GM12878 (cell line): ENCODE measurements at regions of chr14 and their contacts with region 1.

Region 1: GRCh38 chr14:32076278-32077080 is 625 bp upstream of the ARHGAP5 start:
- DNase-seq: peak; percentile 28
- ATAC-seq: peak; percentile 65
- H3K4me3 ChIP-seq: peak overlapping the region; percentile 95
- H3K27ac ChIP-seq: no peak overlapping the region
- H3K4me1 ChIP-seq: no peaks in the 10 kb centered on the region
- H3K27me3 ChIP-seq: no peaks in the 10 kb centered on the region
- CTCF ChIP-seq: no peak
- EP300 ChIP-seq: no peak
- POLR2A ChIP-seq: no peak
- RAD21 ChIP-seq: no peak

Region 2: DNA sequence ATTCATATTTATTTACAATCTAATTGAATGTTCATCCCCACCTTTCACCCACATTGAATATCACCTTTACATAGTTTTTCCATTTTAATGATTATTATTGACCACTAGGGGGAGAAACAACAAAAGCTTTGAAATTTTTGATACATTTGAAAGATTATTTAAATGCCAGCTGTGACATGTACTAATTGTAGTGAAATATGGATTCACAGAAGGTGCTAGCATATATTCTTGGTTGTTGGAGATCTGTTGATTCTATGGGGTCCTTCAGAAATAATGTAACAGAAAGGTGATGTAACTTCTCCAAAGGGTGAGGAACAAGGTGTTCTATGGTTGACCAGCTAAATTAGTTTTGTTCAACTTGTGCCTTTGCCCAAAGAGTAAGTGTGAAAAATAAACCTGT is 566.3 kb before region 1 on chr14:
- CTCF ChIA-PET with region 1: interaction called, 7 read pairs
- POLR2A ChIA-PET with region 1: no interaction called
- RAD21 ChIA-PET with region 1: no interaction called
- SMC1A ChIA-PET with region 1: interaction called, 3 read pairs
- in situ Hi-C with region 1: no loop called
- intact Hi-C with region 1: loop called (anchors 10 kb)
- DNase-seq: no peak
- ATAC-seq: peak; percentile 41; the same call in 2 of the 3 replicates
- H3K4me3 ChIP-seq: no peak overlapping the region
- H3K27ac ChIP-seq: no peak overlapping the region
- H3K4me1 ChIP-seq: no peaks in the 10 kb centered on the region
- H3K27me3 ChIP-seq: no peaks in the 10 kb centered on the region
- CTCF ChIP-seq: peak; percentile 26 to 50 (median 42); a peak in 4 of 6 replicates
- EP300 ChIP-seq: no peak
- POLR2A ChIP-seq: no peak
- RAD21 ChIP-seq: peak; percentile 54

Region 3: DNA sequence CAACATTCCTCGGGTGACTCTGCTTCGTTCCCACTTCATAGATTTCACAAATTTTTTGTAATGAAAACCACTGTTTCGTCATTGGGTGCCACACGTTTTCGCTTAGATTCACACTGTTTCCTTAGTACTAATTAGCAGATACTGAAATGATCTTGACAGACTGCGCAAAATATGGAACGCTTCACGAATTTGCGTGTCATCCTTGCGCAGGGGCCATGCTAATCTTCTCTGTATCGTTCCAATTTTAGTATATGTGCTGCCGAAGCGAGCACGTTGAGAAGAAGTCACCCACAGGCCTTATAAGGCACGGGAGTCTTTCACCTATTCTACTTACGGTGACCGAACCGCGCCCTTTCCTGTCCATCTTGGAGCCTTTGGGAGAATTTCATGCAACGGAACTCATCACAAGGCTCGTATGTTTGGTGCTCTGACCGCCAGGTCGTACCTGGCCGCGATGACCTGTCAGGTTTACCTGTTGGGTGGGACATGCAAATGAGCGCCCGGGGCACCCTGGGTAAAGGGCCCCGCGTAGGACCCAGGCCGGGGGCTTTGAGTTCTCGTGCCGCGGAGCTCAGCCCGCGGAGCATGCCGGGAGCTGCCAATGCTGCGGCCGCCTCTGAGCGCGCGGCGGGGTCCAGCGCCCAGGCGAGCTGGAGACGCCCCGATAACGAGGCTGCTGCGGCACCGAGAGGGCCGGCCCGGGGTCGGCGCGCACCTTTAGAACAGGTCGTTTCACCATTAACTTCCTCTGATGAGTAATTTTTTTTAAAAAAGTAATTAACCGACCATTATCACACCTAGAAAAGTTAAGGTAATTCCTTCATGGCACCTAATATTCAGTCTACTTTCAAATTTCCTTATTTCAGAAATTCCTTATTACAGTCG is 126.8 kb after region 1 on chr14 and contains the start of gene RNU6-8:
- CTCF ChIA-PET with region 1: interaction called, 10 read pairs
- POLR2A ChIA-PET with region 1: interaction called, 3 read pairs
- RAD21 ChIA-PET with region 1: interaction called, 13 read pairs
- SMC1A ChIA-PET with region 1: interaction called, 9 read pairs
- in situ Hi-C with region 1: loop called (anchors 5 kb)
- intact Hi-C with region 1: loop called (anchors 2 kb)
- DNase-seq: peak; percentile 57
- ATAC-seq: peak; percentile 76
- H3K4me3 ChIP-seq: peak within 1 kb of the TSS; percentile 73
- H3K27ac ChIP-seq: peak within 1 kb of the TSS; percentile 79
- H3K4me1 ChIP-seq: peaks cover 33% of the 10 kb centered on the region
- H3K27me3 ChIP-seq: no peaks in the 10 kb centered on the region
- CTCF ChIP-seq: no peak
- EP300 ChIP-seq: peak; percentile 6 to 38; a peak in 2 of 4 replicates
- POLR2A ChIP-seq: peak; percentile 54; the same call in 1 of the 2 replicates
- RAD21 ChIP-seq: no peak
- polyA plus RNA-seq, gene RNU6-8: not detected

Region 4: GRCh38 chr14:32259368-32260013 is 183.0 kb after region 1 on chr14:
- CTCF ChIA-PET with region 1: interaction called, 300 read pairs
- POLR2A ChIA-PET with region 1: interaction called, 3 read pairs
- RAD21 ChIA-PET with region 1: interaction called, 99 read pairs
- SMC1A ChIA-PET with region 1: interaction called, 154 read pairs
- in situ Hi-C with region 1: loop called (anchors 5 kb)
- intact Hi-C with region 1: no loop called
- DNase-seq: peak; percentile 66
- ATAC-seq: peak; percentile 90
- H3K4me3 ChIP-seq: no peak overlapping the region
- H3K27ac ChIP-seq: peak overlapping the region; percentile 69
- H3K4me1 ChIP-seq: peaks cover 24% of the 10 kb centered on the region
- H3K27me3 ChIP-seq: no peaks in the 10 kb centered on the region
- CTCF ChIP-seq: no peak
- EP300 ChIP-seq: peak; percentile 41 to 45; a peak in 2 of 4 replicates
- POLR2A ChIP-seq: no peak
- RAD21 ChIP-seq: 0 out of 2 replicates have a peak, but pooled peaks have one; percentile 6

Region 5: DNA sequence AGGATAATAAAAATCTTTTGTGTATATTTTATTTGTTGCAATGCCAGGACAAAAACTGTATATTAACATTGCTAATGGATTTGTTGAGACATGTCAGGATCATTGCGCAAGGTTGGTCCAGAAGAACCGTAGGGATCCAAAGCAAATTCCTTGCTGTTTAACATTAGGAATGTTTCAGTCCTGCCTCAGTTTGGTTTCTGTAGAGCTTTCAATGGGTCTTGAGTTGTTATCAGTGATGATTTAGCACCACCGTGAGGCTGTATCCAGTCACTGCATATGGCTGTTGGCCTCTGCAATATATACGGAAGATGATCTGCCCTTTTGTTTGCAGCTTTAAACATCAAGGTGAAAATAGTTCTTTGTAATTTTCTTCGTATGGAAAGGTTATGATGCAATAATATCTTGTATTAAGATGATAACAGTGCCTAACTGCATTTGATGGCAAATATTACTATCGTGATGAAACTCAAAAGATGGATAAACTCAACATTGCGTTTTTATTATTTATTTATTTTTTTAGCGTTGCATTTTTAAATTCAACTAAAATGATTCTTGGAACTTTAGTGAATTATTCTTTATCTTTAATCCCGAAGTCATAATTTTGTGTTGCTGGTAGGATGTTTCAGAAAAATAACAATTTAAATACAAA is 483.9 kb after region 1 on chr14:
- CTCF ChIA-PET with region 1: interaction called, 8 read pairs
- POLR2A ChIA-PET with region 1: no interaction called
- RAD21 ChIA-PET with region 1: interaction called, 4 read pairs
- SMC1A ChIA-PET with region 1: interaction called, 4 read pairs
- in situ Hi-C with region 1: loop called (anchors 5 kb)
- intact Hi-C with region 1: loop called (anchors 5 kb)
- DNase-seq: no peak
- ATAC-seq: peak; percentile 85
- H3K4me3 ChIP-seq: no peak overlapping the region
- H3K27ac ChIP-seq: no peak overlapping the region
- H3K4me1 ChIP-seq: no peaks in the 10 kb centered on the region
- H3K27me3 ChIP-seq: no peaks in the 10 kb centered on the region
- CTCF ChIP-seq: peak; percentile 82 to 90 (median 87)
- EP300 ChIP-seq: no peak
- POLR2A ChIP-seq: no peak
- RAD21 ChIP-seq: peak; percentile 88